CD8-positive, alpha-beta T cell (primary cell): ENCODE measurements at regions of chr11 and their contacts with region 1.

Region 1: DNA sequence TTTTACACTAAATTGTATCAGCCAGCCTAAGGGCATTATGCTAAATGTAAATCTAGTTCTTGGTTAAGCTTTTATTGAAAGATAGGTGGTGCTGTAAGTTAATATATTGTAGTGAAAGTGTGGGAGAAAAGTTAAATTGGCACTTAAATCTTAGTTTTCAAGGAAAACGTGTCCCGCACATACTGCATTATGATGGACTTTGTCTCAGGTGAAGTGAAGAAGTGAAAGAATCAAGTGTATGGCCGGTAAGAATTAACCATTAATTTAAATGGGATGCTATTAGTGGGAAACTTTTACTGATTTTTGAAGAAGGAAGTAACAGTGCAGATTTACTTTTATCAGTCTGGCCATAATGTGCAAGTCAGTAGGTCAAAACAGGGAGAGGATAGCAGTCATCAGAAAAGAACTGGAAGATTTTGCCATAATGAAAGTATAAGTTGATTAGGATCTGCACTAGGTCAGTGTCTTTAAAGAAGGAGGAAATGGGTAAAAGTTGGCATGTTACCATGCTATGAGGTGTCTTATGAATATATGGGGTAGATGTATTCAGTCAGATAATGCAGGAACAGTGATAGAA is 81.6 kb downstream of the PDHX start:
- DNase-seq: peak in 2 of 9 experiments; percentile 38 to 54
- ATAC-seq: peak; percentile 58
- H3K4me3 ChIP-seq: no peak overlapping the region
- H3K4me3 Mint-ChIP-seq: no peak overlapping the region
- H3K27ac ChIP-seq: no peak overlapping the region
- H3K27ac Mint-ChIP-seq: peak overlapping the region; percentile 49
- H3K4me1 ChIP-seq: peaks cover 6% of the 10 kb centered on the region
- H3K4me1 Mint-ChIP-seq: peaks cover 14% of the 10 kb centered on the region
- H3K27me3 ChIP-seq: no peaks in the 10 kb centered on the region
- H3K27me3 Mint-ChIP-seq: no peaks in the 10 kb centered on the region
- CTCF ChIP-seq: peak; percentile 95

Region 2: GRCh38 chr11:34536077-34536476 is 462.0 kb before region 1 on chr11:
- CTCF ChIA-PET with region 1: no interaction called
- POLR2A ChIA-PET with region 1: no interaction called
- intact Hi-C with region 1: no loop called
- DNase-seq: no peak
- ATAC-seq: no peak
- H3K4me3 ChIP-seq: no peak overlapping the region
- H3K4me3 Mint-ChIP-seq: no peak overlapping the region
- H3K27ac ChIP-seq: no peak overlapping the region
- H3K27ac Mint-ChIP-seq: no peak overlapping the region
- H3K4me1 ChIP-seq: no peaks in the 10 kb centered on the region
- H3K4me1 Mint-ChIP-seq: no peaks in the 10 kb centered on the region
- H3K27me3 ChIP-seq: no peaks in the 10 kb centered on the region
- H3K27me3 Mint-ChIP-seq: peaks cover 26% of the 10 kb centered on the region
- CTCF ChIP-seq: no peak

Region 3: GRCh38 chr11:34926101-34926830 is 71.8 kb before region 1 on chr11:
- CTCF ChIA-PET with region 1: interaction called, 5 read pairs
- POLR2A ChIA-PET with region 1: no interaction called
- intact Hi-C with region 1: loop called (anchors 2 kb)
- DNase-seq: peak in 3 of 9 experiments; percentile 12 to 73 (median 63)
- ATAC-seq: peak; percentile 71
- H3K4me3 ChIP-seq: no peak overlapping the region
- H3K4me3 Mint-ChIP-seq: no peak overlapping the region
- H3K27ac ChIP-seq: no peak overlapping the region
- H3K27ac Mint-ChIP-seq: no peak overlapping the region
- H3K4me1 ChIP-seq: peaks cover 3% of the 10 kb centered on the region
- H3K4me1 Mint-ChIP-seq: peaks cover 29% of the 10 kb centered on the region
- H3K27me3 ChIP-seq: no peaks in the 10 kb centered on the region
- H3K27me3 Mint-ChIP-seq: no peaks in the 10 kb centered on the region
- CTCF ChIP-seq: peak; percentile 96

Region 4: DNA sequence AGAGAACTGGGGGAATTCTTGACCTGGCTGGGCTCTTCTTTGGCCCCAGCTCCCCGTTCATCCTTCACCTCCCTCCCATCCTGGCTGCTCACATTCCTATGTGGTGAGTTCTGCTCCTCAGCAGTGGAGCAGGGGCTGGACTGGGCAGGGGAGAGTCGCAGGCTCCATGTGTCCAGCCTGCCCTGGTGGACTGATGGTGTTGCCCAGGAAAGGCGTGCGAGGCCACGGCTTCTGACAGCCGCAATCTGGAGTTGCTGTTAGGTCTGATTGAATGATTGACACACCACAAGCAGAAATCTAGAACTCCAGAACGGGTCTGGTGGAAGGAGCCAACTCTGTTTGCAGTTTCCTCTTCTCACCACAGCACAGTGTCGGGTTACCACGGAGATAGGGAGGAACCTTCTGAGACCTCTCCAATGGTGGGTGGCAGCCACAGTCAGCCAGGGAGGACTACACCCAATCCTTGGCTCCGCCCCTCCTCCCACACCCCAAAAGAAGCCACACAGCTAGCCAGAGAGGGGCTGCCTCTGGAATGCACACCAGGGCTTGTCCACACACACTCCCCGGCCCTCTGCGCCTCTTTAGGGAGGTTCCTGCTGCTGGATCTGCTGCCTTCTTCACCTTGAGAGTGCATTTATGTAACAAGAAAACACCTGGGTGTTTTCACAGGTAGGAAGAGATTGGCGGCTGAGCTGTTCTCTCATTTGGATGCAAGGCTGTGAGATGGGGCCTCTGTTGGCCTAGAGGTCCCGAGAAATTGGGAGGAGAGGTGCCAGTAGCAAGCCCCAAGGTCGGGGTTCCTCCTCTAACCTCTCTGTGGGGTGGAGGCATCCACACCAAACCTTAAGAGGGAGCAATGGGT is 84.5 kb after region 1 on chr11:
- CTCF ChIA-PET with region 1: interaction called, 4 read pairs
- POLR2A ChIA-PET with region 1: no interaction called
- intact Hi-C with region 1: loop called (anchors 2 to 5 kb)
- DNase-seq: peak; percentile 70 to 95 (median 84)
- ATAC-seq: peak; percentile 79
- H3K4me3 ChIP-seq: peak overlapping the region; percentile 12 to 40
- H3K4me3 Mint-ChIP-seq: peak overlapping the region; percentile 73
- H3K27ac ChIP-seq: peak overlapping the region; percentile 73 to 86
- H3K27ac Mint-ChIP-seq: peak overlapping the region; percentile 98
- H3K4me1 ChIP-seq: peaks cover 69% of the 10 kb centered on the region
- H3K4me1 Mint-ChIP-seq: peaks cover 83% of the 10 kb centered on the region
- H3K27me3 ChIP-seq: no peaks in the 10 kb centered on the region
- H3K27me3 Mint-ChIP-seq: no peaks in the 10 kb centered on the region
- CTCF ChIP-seq: no peak

Region 5: GRCh38 chr11:35144136-35144741 is 146.2 kb after region 1 on chr11:
- CTCF ChIA-PET with region 1: interaction called, 11 read pairs
- POLR2A ChIA-PET with region 1: interaction called, 10 read pairs
- intact Hi-C with region 1: loop called (anchors 1 to 5 kb)
- DNase-seq: peak in 8 of 9 experiments; percentile 35 to 89 (median 70)
- ATAC-seq: peak; percentile 51
- H3K4me3 ChIP-seq: peak overlapping the region; percentile 37 to 46
- H3K4me3 Mint-ChIP-seq: peak overlapping the region; percentile 79
- H3K27ac ChIP-seq: peak overlapping the region; percentile 54 to 77
- H3K27ac Mint-ChIP-seq: peak overlapping the region; percentile 98
- H3K4me1 ChIP-seq: peaks cover 70% of the 10 kb centered on the region
- H3K4me1 Mint-ChIP-seq: peaks cover 80% of the 10 kb centered on the region
- H3K27me3 ChIP-seq: no peaks in the 10 kb centered on the region
- H3K27me3 Mint-ChIP-seq: no peaks in the 10 kb centered on the region
- CTCF ChIP-seq: no peak

Region 6: DNA sequence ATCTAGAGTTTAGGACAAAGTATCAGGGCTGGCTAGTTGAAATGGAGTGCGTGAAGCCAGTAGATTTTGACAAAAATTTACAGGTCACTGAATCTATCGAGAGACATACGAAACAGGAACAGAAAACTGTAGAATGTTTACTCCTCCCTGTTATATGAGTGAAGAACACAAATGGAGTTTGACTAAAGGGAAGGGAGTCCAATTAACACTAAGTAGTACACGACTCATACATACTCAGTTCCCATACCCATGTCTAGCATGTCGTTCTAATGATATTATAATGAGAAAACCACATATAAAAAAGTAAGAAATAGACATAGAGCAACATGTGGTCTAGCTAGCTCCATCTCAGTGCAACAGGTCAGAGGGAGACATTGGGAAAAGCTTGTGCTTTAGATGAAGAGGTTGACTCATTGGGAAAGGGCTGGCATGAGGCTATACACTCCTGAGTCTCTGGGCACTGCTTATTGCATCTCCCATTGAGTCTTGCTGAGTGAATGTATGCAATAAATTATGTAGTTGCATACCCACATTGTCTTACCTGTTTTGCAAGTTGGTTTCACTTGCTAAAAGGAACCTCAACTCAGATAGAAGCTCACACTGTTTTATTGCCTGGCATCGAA is 184.4 kb after region 1 on chr11:
- CTCF ChIA-PET with region 1: interaction called, 5 read pairs
- POLR2A ChIA-PET with region 1: interaction called, 3 read pairs
- intact Hi-C with region 1: loop called (anchors 1 to 5 kb)
- DNase-seq: peak in 1 of 9 experiments; percentile 24
- ATAC-seq: no peak
- H3K4me3 ChIP-seq: no peak overlapping the region
- H3K4me3 Mint-ChIP-seq: peak overlapping the region; percentile 24
- H3K27ac ChIP-seq: peak overlapping the region in 1 of 2 experiments; percentile 9
- H3K27ac Mint-ChIP-seq: peak overlapping the region; percentile 89
- H3K4me1 ChIP-seq: peaks cover 80% of the 10 kb centered on the region
- H3K4me1 Mint-ChIP-seq: peaks cover 86% of the 10 kb centered on the region
- H3K27me3 ChIP-seq: no peaks in the 10 kb centered on the region
- H3K27me3 Mint-ChIP-seq: no peaks in the 10 kb centered on the region
- CTCF ChIP-seq: no peak

Region 7: DNA sequence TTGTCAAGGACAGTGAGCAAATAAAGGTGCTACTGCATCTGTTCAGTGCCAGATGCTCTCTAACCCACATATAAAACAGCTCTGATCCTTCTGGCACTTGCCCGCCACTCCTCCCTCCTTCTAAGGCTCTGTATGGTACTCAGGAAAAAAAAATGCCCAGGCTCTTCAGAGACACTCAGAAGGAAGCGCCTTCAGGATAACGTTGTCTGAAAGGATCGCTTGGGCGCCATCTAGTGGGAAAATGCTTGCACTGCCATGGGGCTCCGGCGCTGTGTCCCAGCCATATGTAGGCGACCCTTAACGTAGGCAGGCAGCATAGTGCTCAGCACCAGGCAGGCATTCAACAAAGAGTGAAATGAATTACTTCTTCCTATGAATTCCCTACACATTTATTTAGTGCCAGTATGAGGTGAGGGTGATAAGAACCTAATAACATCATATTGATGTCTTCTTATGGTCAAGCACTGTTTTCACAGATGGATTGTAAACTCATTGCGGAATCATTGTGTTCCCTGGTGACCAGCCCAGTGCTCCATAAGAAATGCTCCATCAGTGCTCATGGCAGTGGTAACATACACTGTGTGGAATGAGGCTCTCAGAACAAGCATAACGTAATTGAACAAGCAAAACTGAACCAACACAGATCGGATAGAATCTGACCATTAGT is 487.7 kb after region 1 on chr11:
- CTCF ChIA-PET with region 1: interaction called, 4 read pairs
- POLR2A ChIA-PET with region 1: no interaction called
- intact Hi-C with region 1: loop called in 1 of 2 experiments (anchors 10 kb)
- DNase-seq: peak; percentile 34 to 80 (median 69)
- ATAC-seq: peak; percentile 68
- H3K4me3 ChIP-seq: no peak overlapping the region
- H3K4me3 Mint-ChIP-seq: no peak overlapping the region
- H3K27ac ChIP-seq: no peak overlapping the region
- H3K27ac Mint-ChIP-seq: no peak overlapping the region
- H3K4me1 ChIP-seq: no peaks in the 10 kb centered on the region
- H3K4me1 Mint-ChIP-seq: no peaks in the 10 kb centered on the region
- H3K27me3 ChIP-seq: no peaks in the 10 kb centered on the region
- H3K27me3 Mint-ChIP-seq: peaks cover 51% of the 10 kb centered on the region
- CTCF ChIP-seq: peak; percentile 97